K562 (cell line): ENCODE measurements at regions of chr1 and their contacts with region 1.

Region 1: GRCh38 chr1:109773146-109773899 is 9.6 kb upstream of the EPS8L3 start:
- DNase-seq: peak; percentile 67 to 90 (median 76)
- ATAC-seq: peak; percentile 95
- H3K4me3 ChIP-seq: no peak overlapping the region
- H3K27ac ChIP-seq: no peak overlapping the region
- H3K4me1 ChIP-seq: peaks cover 11 to 12% of the 10 kb centered on the region in 2 experiments; a peak in 3 of 5 replicates
- H3K27me3 ChIP-seq: peaks cover 2 to 23% of the 10 kb centered on the region in 2 experiments; a peak in 3 of 5 replicates
- CTCF ChIP-seq: peak; percentile 97 to 99 (median 98)
- EP300 ChIP-seq: no peak
- POLR2A ChIP-seq: no peak
- RAD21 ChIP-seq: peak; percentile 100

Region 2: GRCh38 chr1:109643385-109644230 is 129.7 kb before region 1 on chr1:
- CTCF ChIA-PET with region 1: interaction called, 77 read pairs
- POLR2A ChIA-PET with region 1: interaction called, 23 read pairs
- in situ Hi-C with region 1: loop called (anchors 5 kb)
- intact Hi-C with region 1: loop called (anchors 1 kb)
- DNase-seq: peak; percentile 84 to 91 (median 86)
- ATAC-seq: peak; percentile 97
- H3K4me3 ChIP-seq: no peak overlapping the region
- H3K27ac ChIP-seq: no peak overlapping the region
- H3K4me1 ChIP-seq: peaks cover 26 to 46% of the 10 kb centered on the region in 2 experiments
- H3K27me3 ChIP-seq: no peaks in the 10 kb centered on the region; a peak in 1 of 5 replicates
- CTCF ChIP-seq: peak; percentile 96 to 97 (median 97)
- EP300 ChIP-seq: no peak
- POLR2A ChIP-seq: no peak
- RAD21 ChIP-seq: peak; percentile 91 to 96

Region 3: GRCh38 chr1:109667452-109668122 is 105.7 kb before region 1 on chr1 and contains the start of gene GSTM2:
- CTCF ChIA-PET with region 1: no interaction called
- POLR2A ChIA-PET with region 1: no interaction called
- in situ Hi-C with region 1: no loop called
- intact Hi-C with region 1: no loop called
- DNase-seq: peak; percentile 94 to 96 (median 96)
- ATAC-seq: peak; percentile 100
- H3K4me3 ChIP-seq: peak within 1 kb of the TSS; percentile 28
- H3K27ac ChIP-seq: no peak within 1 kb of the TSS
- H3K4me1 ChIP-seq: peaks cover 4 to 15% of the 10 kb centered on the region in 2 experiments
- H3K27me3 ChIP-seq: no peaks in the 10 kb centered on the region
- CTCF ChIP-seq: no peak
- EP300 ChIP-seq: no peak
- POLR2A ChIP-seq: no peak
- RAD21 ChIP-seq: no peak
- polyA plus RNA-seq, gene GSTM2: 12.4 to 15.1 TPM

Region 4: GRCh38 chr1:109687616-109688499 is 85.5 kb before region 1 on chr1 and contains the start of gene GSTM1:
- CTCF ChIA-PET with region 1: no interaction called
- POLR2A ChIA-PET with region 1: no interaction called
- in situ Hi-C with region 1: no loop called
- intact Hi-C with region 1: no loop called
- DNase-seq: no peak
- ATAC-seq: no peak
- H3K4me3 ChIP-seq: no peak within 1 kb of the TSS
- H3K27ac ChIP-seq: no peak within 1 kb of the TSS
- H3K4me1 ChIP-seq: no peaks in the 10 kb centered on the region
- H3K27me3 ChIP-seq: no peaks in the 10 kb centered on the region
- CTCF ChIP-seq: no peak
- EP300 ChIP-seq: no peak
- POLR2A ChIP-seq: no peak
- RAD21 ChIP-seq: no peak
- polyA plus RNA-seq, gene GSTM1: not detected

Region 5: GRCh38 chr1:109790735-109791494 is 17.6 kb after region 1 on chr1:
- CTCF ChIA-PET with region 1: no interaction called
- POLR2A ChIA-PET with region 1: interaction called, 4 read pairs
- in situ Hi-C with region 1: no loop called
- intact Hi-C with region 1: loop called (anchors 1 kb)
- DNase-seq: peak; percentile 66 to 80 (median 74)
- ATAC-seq: peak; percentile 62
- H3K4me3 ChIP-seq: no peak overlapping the region
- H3K27ac ChIP-seq: peak overlapping the region; percentile 26; the same call in 2 of the 3 replicates
- H3K4me1 ChIP-seq: peaks cover 65 to 66% of the 10 kb centered on the region in 2 experiments
- H3K27me3 ChIP-seq: no peaks in the 10 kb centered on the region
- CTCF ChIP-seq: peak; percentile 70 to 85 (median 75)
- EP300 ChIP-seq: no peak
- POLR2A ChIP-seq: no peak
- RAD21 ChIP-seq: peak; percentile 62 to 67

Region 6: GRCh38 chr1:110011527-110012041 is 238.3 kb after region 1 on chr1:
- CTCF ChIA-PET with region 1: interaction called, 27 read pairs
- POLR2A ChIA-PET with region 1: no interaction called
- in situ Hi-C with region 1: no loop called
- intact Hi-C with region 1: loop called (anchors 1 kb)
- DNase-seq: peak; percentile 56 to 70 (median 62)
- ATAC-seq: peak; percentile 97
- H3K4me3 ChIP-seq: no peak overlapping the region
- H3K27ac ChIP-seq: no peak overlapping the region
- H3K4me1 ChIP-seq: no peaks in the 10 kb centered on the region
- H3K27me3 ChIP-seq: no peaks in the 10 kb centered on the region
- CTCF ChIP-seq: peak; percentile 65 to 79 (median 68)
- EP300 ChIP-seq: no peak
- POLR2A ChIP-seq: no peak
- RAD21 ChIP-seq: peak; percentile 69 to 85

Region 7: DNA sequence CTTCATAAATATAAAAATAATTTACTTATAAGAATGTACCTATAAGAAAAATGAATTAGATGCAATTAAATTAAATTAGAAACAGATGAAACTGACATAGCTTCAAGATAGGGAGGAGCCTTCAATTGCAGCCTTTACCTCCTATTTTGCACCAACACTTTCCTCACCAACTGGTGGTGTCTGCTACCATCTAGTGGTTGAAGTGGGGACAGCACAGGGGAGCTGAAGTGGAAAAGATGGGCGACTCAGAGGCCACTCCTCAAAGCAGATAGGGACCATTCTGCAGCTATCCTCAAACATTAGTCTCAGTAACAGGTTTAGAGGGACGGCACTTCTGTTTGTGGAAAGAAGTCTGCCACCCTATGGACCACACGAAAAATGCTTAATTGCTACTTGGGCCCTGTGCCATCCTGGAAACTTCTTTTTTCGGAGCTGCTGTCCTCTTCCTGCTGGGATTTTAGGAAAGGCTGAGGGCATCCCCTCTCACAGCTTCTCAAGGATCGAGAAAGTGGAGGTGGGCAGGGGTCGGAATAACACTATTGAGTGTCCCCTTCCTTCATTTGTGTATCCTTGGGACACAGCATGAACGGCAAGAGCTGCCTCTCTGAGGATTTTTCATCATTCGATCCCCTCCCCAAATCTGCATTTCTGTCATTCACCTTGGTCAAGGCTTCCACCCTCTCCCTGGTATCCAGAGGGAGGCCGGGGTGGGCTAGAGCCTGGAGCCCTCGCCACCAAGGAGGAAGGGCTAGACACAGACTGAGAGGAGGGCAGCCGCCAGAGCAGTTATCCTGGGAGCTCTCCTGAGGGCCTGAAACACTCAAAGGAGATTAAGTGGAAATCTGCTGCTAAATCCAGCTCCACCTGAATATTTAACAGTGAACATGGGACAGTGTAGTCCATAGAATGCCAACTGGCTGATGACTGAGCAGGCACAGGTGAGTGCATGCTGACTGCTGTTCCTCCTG is 687.2 kb after region 1 on chr1:
- CTCF ChIA-PET with region 1: no interaction called
- POLR2A ChIA-PET with region 1: no interaction called
- in situ Hi-C with region 1: no loop called
- intact Hi-C with region 1: loop called (anchors 2 kb)
- DNase-seq: peak; percentile 83 to 89 (median 88)
- ATAC-seq: peak; percentile 93
- H3K4me3 ChIP-seq: no peak overlapping the region
- H3K27ac ChIP-seq: no peak overlapping the region
- H3K4me1 ChIP-seq: peaks cover under 1 to 2% of the 10 kb centered on the region in 2 experiments; a peak in 3 of 5 replicates
- H3K27me3 ChIP-seq: peaks cover 0 to 19% of the 10 kb centered on the region in 2 experiments; a peak in 3 of 5 replicates
- CTCF ChIP-seq: peak; percentile 96 to 99 (median 98)
- EP300 ChIP-seq: no peak
- POLR2A ChIP-seq: no peak
- RAD21 ChIP-seq: peak; percentile 99